ENCODE measurements at regions of chr16 and their contacts with region 1.

Region 1: DNA sequence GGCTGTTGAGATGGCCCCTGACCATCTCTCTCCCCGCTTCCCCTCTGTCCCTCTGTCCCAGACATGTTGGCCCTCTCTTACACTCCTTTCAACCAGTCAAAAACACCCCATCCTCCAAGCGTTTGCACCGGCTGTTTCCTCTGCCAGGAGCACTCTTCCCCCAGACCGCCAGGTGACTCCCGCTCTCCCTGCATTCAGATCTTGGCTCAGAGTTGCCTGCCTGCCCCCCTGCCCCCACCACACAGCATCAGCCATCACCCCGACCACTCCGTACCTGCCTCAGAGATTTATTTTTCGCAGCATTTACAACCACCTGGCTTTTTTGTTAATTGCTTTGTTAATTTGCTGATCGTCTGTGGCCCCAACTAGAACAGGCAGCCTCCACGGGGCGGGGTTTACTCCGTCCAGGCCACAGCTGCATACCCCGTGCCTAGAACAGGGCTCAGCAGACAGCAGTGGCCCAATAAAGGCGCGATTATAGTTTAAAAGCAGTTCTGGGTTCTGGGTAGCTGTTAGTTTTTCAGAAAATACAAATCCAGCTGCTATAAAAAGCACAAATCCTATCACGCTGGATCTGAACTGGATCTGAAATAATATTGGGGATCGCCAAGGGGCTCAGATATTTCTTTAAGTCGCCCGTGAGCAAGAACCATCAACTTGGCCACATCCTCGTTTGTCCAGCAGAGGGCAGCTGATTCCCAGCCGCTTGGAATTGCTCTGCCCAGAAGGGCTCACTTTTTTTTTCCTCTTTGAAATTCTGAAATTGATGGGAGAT is 173.6 kb downstream of the IRF8 start:
- DNase-seq: peak; percentile 78 to 89 (median 82)
- H3K4me3 ChIP-seq: no peak overlapping the region
- H3K27ac ChIP-seq: no peak overlapping the region
- H3K4me1 ChIP-seq: no peaks in the 10 kb centered on the region
- H3K27me3 ChIP-seq: no peaks in the 10 kb centered on the region
- CTCF ChIP-seq: peak; percentile 79

Region 2: GRCh38 chr16:85781695-85782370 is 290.7 kb before region 1 on chr16:
- intact Hi-C with region 1: no loop called
- DNase-seq: no peak
- H3K4me3 ChIP-seq: no peak overlapping the region
- H3K27ac ChIP-seq: no peak overlapping the region
- H3K4me1 ChIP-seq: peaks cover 0 to 3% (median 0%) of the 10 kb centered on the region in 3 donors
- H3K27me3 ChIP-seq: no peaks in the 10 kb centered on the region
- CTCF ChIP-seq: no peak

Region 3: GRCh38 chr16:86519649-86520316 is 447.3 kb after region 1 on chr16:
- intact Hi-C with region 1: loop called (anchors 5 kb)
- DNase-seq: peak; percentile 63 to 81 (median 74)
- H3K4me3 ChIP-seq: no peak overlapping the region
- H3K27ac ChIP-seq: no peak overlapping the region
- H3K4me1 ChIP-seq: peaks cover 0 to 3% (median 0%) of the 10 kb centered on the region in 3 donors
- H3K27me3 ChIP-seq: peaks cover 34% of the 10 kb centered on the region
- CTCF ChIP-seq: peak; percentile 84